Dorsolateral prefrontal cortex (tissue), 120 donors: ENCODE measurements at regions of chr10 and their contacts with region 1.

Region 1: GRCh38 chr10:126504063-126504739 is 115.9 kb upstream of the ADAM12 start:
- DNase-seq: peak in 2 of 10 donors; percentile 44 to 48
- H3K4me3 ChIP-seq: no peak overlapping the region
- H3K27ac ChIP-seq: peak overlapping the region in 29 of 59 donors; percentile 1 to 73 (median 53)
- H3K27me3 ChIP-seq: no peaks in the 10 kb centered on the region
- CTCF ChIP-seq: peak; percentile 27 to 80 (median 66)

Region 2: DNA sequence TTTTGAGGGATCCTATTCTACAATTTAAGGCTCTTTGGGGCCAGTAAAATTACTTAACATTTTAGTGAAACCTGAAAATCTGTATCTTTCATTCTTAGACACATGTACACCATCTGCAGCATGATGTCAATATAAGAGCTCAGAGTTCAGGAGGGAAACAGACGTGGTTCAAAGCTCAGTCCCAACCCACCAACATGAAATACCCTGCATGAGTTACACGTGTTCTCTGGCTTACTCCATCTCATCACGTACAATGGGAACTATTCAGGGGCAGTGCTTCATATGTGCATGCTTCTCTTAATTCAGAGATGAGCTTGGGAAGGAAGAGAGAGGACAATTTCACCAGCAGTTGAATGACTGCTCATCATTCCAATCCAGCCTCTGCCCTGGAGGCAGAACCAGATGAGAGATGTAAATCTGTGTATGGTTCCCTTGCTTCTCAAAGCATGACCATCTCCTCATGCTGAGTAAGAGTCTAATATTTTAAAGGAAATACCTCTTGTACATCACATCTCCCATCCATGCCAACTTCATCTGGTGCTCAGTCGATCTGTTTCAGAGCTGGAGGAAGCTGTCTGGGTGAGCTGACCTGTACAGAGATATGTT is 86.9 kb before region 1 on chr10:
- intact Hi-C with region 1: no loop called
- DNase-seq: no peak
- H3K4me3 ChIP-seq: no peak overlapping the region
- H3K27ac ChIP-seq: no peak overlapping the region
- H3K27me3 ChIP-seq: no peaks in the 10 kb centered on the region
- CTCF ChIP-seq: no peak

Region 3: DNA sequence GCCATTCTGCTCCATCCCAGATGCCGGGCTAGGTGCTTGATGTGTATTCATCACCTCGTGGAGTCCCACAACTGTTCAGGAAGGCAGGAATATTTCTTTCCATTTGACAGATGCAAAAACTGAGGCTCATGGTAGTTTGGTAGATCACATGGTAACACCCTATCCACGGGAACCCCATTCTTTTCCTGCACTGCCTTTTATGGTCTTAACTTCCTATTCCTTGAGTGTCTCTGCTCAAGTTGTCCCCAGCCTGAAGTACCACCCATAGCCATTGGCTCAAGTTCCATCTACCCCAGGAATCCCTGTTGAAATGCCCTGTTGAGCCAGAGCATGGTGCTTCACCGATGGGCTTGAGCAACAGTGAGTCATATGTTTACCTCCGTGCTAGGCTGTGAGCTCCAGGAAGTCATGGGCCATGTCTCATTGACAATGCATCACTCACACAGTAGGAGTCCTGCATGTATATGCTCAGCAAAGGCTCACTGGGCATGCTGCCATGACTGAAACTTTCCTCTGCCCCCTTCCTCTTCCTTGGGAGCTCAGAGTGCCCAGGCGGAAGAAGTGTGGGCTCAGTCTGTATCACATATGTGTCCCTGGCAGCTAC is 44.2 kb before region 1 on chr10:
- intact Hi-C with region 1: loop called in 1 of 2 experiments (anchors 5 kb)
- DNase-seq: peak in 1 of 10 donors; percentile 55
- H3K4me3 ChIP-seq: no peak overlapping the region
- H3K27ac ChIP-seq: peak overlapping the region in 17 of 59 donors; percentile 0 to 62 (median 39)
- H3K27me3 ChIP-seq: peaks cover 0 to 4% (median 0%) of the 10 kb centered on the region in 45 donors
- CTCF ChIP-seq: no peak

Region 4: DNA sequence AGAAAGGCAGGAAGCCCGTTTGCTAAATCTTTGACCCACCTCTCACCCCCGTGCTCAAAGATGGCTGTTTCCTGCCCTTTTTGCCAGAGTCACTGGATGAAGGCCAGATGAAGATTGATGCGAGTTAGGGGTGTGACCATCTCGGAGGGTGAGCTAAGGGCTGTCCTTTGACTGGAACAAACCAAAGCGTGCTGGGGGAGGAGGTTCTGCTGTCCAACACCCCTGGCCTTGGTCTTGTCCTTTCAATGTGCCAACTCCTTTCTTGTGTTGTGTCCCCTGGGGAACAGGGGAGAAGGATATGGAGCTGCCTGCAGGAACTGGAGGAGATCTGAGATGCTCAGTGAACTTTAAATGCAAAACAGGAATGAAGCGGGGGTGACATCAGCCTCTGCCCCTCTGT is 25.7 kb before region 1 on chr10:
- intact Hi-C with region 1: loop called in 1 of 2 experiments (anchors 2 kb)
- DNase-seq: no peak
- H3K4me3 ChIP-seq: no peak overlapping the region
- H3K27ac ChIP-seq: peak overlapping the region in 6 of 59 donors; percentile 3 to 56 (median 28)
- H3K27me3 ChIP-seq: no peaks in the 10 kb centered on the region
- CTCF ChIP-seq: no peak